Right ventricle myocardium inferior (tissue), 1 donor: ENCODE measurements at regions of chr13 and their contacts with region 1.

Region 1: GRCh38 chr13:99916366-99917103 is 55.0 kb downstream of the ZIC5 start:
- DNase-seq: no peak
- ATAC-seq: peak; percentile 71

Region 2: DNA sequence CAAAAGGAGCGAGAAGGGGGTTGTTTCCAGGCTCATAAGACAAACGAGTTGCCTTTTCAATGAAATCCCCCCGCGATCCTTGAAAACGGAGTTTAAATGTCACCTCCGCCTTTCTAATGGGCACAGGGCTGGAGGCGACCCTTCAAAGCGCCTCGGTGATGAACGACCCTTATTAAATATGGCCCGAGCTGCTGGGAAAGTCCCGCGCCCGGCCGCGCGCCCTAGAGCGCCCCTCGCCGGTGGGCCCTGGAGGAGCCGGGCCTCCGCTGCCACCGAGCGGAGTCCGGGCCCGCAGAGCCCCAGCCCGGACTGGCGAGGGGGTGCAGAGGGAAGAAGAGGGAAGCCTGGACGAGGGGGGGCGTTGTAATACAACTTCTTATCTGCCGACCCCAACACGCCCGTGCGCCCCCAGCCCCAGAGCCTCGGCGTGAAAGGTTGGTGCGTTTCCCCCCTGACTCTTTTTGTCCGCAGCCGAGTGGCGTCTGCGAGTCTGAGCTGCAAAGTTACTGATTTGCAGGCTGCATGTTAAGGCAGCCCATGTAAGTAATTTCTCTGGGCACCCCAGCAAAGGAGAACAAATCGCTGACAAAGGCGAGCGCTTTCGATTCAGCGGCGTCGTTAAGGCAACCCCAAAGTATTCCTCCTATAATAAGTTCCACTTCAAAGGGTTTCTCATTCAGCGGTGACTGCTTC is 43.1 kb after region 1 on chr13:
- intact Hi-C with region 1: no loop called
- DNase-seq: no peak
- ATAC-seq: no peak

Region 3: GRCh38 chr13:100254002-100254401 is 337.5 kb after region 1 on chr13:
- intact Hi-C with region 1: no loop called
- DNase-seq: no peak
- ATAC-seq: no peak

Region 4: DNA sequence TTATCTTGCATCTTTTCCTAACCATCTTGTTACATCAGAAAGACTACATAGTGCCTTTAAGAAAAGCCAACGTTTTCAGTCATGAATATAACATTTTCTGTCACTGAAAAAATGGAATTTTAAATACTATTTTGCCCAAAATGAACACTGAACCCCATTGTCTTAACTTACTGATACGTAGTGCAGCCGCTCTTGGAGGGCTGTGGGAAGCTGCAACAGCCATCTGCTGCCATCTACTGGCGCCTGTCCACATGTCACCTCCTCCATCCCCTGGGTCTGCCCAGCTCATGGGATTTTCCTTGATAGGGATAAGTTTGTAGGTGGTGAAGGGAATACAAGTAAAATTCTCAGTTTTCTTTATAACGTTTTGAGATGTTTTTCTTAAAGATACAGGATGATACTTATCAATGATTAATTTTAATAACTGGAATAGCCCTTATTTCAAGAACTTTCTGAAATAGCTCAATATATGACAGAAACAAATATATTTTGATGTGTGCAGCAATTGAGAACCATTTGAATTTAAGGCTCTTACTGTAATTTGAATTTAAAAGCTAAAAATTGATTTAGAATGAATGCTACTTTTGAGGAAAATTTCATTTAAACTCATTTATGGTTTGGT is 598.4 kb after region 1 on chr13:
- intact Hi-C with region 1: loop called (anchors 5 kb)
- DNase-seq: peak; percentile 80
- ATAC-seq: peak; percentile 91